K562 (cell line): ENCODE measurements at regions of chr19 and their contacts with region 1.

Region 1: GRCh38 chr19:1241417-1242095 is at the start of gene ATP5F1D:
- DNase-seq: peak; percentile 74 to 98 (median 86)
- ATAC-seq: peak; percentile 73
- H3K4me3 ChIP-seq: peak within 1 kb of the TSS; percentile 100
- H3K27ac ChIP-seq: peak within 1 kb of the TSS; percentile 89
- H3K4me1 ChIP-seq: peaks cover 49 to 98% of the 10 kb centered on the region in 2 experiments
- H3K27me3 ChIP-seq: no peaks in the 10 kb centered on the region
- CTCF ChIP-seq: 0 out of 6 replicates have a peak, but pooled peaks of 1 of the 3 experiments have one; percentile 9
- EP300 ChIP-seq: peak; percentile 52; the same call in 1 of the 2 replicates
- POLR2A ChIP-seq: no peak; the same call in 1 of the 2 replicates
- RAD21 ChIP-seq: no peak
- polyA plus RNA-seq, gene ATP5F1D: 9.7 to 23.3 TPM

Region 2: GRCh38 chr19:860481-861101 is 381.0 kb before region 1 on chr19:
- CTCF ChIA-PET with region 1: no interaction called
- POLR2A ChIA-PET with region 1: no interaction called
- in situ Hi-C with region 1: no loop called
- intact Hi-C with region 1: loop called (anchors 5 kb)
- DNase-seq: peak; percentile 90 to 94 (median 92)
- ATAC-seq: peak; percentile 78
- H3K4me3 ChIP-seq: peak overlapping the region; percentile 62
- H3K27ac ChIP-seq: peak overlapping the region; percentile 82
- H3K4me1 ChIP-seq: peaks cover 25 to 63% of the 10 kb centered on the region in 2 experiments
- H3K27me3 ChIP-seq: no peaks in the 10 kb centered on the region
- CTCF ChIP-seq: peak in 2 of 3 experiments; percentile 45 to 55; a peak in 4 of 6 replicates
- EP300 ChIP-seq: no peak
- POLR2A ChIP-seq: peak; percentile 81
- RAD21 ChIP-seq: peak; percentile 30; a peak in 2 of 4 replicates

Region 3: GRCh38 chr19:925526-926322 is 315.8 kb before region 1 on chr19 and contains the start of gene ARID3A:
- CTCF ChIA-PET with region 1: interaction called, 29 read pairs
- POLR2A ChIA-PET with region 1: no interaction called
- in situ Hi-C with region 1: loop called (anchors 5 kb)
- intact Hi-C with region 1: loop called (anchors 1 kb)
- DNase-seq: peak; percentile 77 to 94 (median 87)
- ATAC-seq: peak; percentile 83
- H3K4me3 ChIP-seq: peak within 1 kb of the TSS; percentile 99
- H3K27ac ChIP-seq: peak within 1 kb of the TSS; percentile 97
- H3K4me1 ChIP-seq: peaks cover 8 to 71% of the 10 kb centered on the region in 2 experiments; a peak in 4 of 5 replicates
- H3K27me3 ChIP-seq: no peaks in the 10 kb centered on the region
- CTCF ChIP-seq: no peak
- EP300 ChIP-seq: no peak
- POLR2A ChIP-seq: no peak
- RAD21 ChIP-seq: no peak
- polyA plus RNA-seq, gene ARID3A: 1.4 to 2.0 TPM

Region 4: DNA sequence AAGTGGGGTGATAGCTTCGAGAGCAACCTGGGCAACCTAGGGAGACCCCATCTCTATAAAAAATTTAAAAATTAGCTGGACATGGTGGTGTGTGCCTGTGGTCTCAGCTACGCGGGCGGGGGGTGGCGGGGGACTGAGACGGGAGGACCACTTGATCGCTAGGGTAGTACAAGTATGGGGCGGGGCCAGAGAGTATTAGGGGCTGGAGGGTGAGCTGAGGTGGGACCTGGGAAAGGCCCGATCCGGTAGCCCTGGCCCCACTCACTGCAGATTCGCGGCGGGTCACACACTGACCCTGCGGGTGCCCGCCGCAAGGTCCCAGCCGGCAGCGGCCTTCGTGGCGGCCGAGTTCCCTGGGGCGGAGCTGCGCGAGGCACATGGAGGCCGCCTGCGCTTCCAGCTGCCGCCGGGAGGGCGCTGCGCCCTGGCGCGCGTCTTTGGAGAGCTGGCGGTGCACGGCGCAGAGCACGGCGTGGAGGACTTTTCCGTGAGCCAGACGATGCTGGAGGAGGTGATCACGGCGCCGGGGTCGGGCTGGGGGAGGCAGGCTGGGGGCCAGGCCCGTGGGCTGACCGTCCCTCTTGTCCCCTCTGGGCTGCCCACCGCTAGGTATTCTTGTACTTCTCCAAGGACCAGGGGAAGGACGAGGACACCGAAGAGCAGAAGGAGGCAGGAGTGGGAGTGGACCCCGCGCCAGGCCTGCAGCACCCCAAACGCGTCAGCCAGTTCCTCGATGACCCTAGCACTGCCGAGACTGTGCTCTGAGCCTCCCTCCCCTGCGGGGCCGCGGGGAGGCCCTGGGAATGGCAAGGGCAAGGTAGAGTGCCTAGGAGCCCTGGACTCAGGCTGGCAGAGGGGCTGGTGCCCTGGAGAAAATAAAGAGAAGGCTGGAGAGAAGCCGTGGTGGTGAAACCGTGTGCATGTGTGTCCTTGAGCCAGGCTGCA is 176.6 kb before region 1 on chr19:
- CTCF ChIA-PET with region 1: no interaction called
- POLR2A ChIA-PET with region 1: no interaction called
- in situ Hi-C with region 1: no loop called
- intact Hi-C with region 1: no loop called
- DNase-seq: peak in 1 of 4 experiments; percentile 72
- ATAC-seq: peak; percentile 71
- H3K4me3 ChIP-seq: no peak overlapping the region
- H3K27ac ChIP-seq: no peak overlapping the region
- H3K4me1 ChIP-seq: peaks cover 9 to 80% of the 10 kb centered on the region in 2 experiments
- H3K27me3 ChIP-seq: no peaks in the 10 kb centered on the region
- CTCF ChIP-seq: peak; percentile 46 to 66 (median 52); a peak in 5 of 6 replicates
- EP300 ChIP-seq: no peak
- POLR2A ChIP-seq: no peak; the same call in 1 of the 2 replicates
- RAD21 ChIP-seq: 0 out of 4 replicates have a peak, but pooled peaks of 1 of the 2 experiments have one; percentile 27

Region 5: GRCh38 chr19:1221141-1221903 is 20.2 kb before region 1 on chr19:
- CTCF ChIA-PET with region 1: interaction called, 3 read pairs
- POLR2A ChIA-PET with region 1: interaction called, 4 read pairs
- in situ Hi-C with region 1: no loop called
- intact Hi-C with region 1: loop called (anchors 2 kb)
- DNase-seq: no peak
- ATAC-seq: peak; percentile 51
- H3K4me3 ChIP-seq: no peak overlapping the region
- H3K27ac ChIP-seq: no peak overlapping the region
- H3K4me1 ChIP-seq: peaks cover 13 to 82% of the 10 kb centered on the region in 2 experiments; a peak in 4 of 5 replicates
- H3K27me3 ChIP-seq: no peaks in the 10 kb centered on the region
- CTCF ChIP-seq: peak; percentile 50 to 65 (median 53)
- EP300 ChIP-seq: no peak
- POLR2A ChIP-seq: no peak
- RAD21 ChIP-seq: peak in 1 of 2 experiments; percentile 31; a peak in 2 of 4 replicates

Region 6: DNA sequence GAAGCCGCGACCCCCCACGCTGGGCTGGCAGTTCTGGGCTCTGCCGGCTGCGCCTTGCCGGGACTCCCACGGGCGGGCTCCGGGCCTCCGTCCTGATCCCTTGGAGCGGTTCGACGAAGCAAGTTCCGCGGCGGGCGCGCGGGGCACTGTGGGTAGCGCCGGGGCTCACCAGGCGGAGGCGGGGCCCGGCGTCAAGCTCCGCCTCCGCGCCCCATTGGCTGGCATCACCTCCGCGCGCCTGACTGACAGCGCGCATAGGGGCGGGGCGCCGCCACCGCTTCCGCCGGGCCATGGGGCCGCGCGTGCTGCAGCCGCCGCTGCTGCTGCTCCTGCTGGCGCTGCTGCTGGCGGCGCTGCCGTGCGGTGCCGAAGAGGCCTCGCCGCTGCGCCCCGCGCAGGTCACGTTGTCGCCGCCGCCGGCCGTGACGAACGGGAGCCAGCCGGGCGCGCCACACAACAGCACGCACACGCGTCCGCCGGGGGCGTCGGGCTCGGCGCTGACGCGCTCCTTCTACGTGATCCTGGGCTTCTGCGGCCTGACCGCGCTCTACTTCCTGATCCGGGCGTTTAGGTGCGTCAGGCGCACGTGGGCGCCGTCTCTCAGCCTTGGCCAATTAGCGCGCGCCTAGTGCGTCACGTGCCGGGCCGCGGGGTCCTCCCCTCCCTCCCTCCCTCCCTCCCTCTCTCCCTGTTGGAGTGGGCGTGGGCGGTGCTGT is 33.9 kb after region 1 on chr19 and contains the start of gene FAM174C:
- CTCF ChIA-PET with region 1: no interaction called
- POLR2A ChIA-PET with region 1: interaction called, 10 read pairs
- in situ Hi-C with region 1: no loop called
- intact Hi-C with region 1: no loop called
- DNase-seq: peak; percentile 86 to 98 (median 92)
- ATAC-seq: peak; percentile 76
- H3K4me3 ChIP-seq: peak within 1 kb of the TSS; percentile 68
- H3K27ac ChIP-seq: peak within 1 kb of the TSS; percentile 92
- H3K4me1 ChIP-seq: peaks cover 53 to 94% of the 10 kb centered on the region in 2 experiments
- H3K27me3 ChIP-seq: no peaks in the 10 kb centered on the region
- CTCF ChIP-seq: peak in 1 of 3 experiments; percentile 20; a peak in 1 of 6 replicates
- EP300 ChIP-seq: no peak
- POLR2A ChIP-seq: peak; percentile 90
- RAD21 ChIP-seq: no peak
- polyA plus RNA-seq, gene FAM174C: 0.66 to 2.7 TPM